PC-3 (cell line): ENCODE measurements at regions of chr11 and their contacts with region 1.

Region 1: DNA sequence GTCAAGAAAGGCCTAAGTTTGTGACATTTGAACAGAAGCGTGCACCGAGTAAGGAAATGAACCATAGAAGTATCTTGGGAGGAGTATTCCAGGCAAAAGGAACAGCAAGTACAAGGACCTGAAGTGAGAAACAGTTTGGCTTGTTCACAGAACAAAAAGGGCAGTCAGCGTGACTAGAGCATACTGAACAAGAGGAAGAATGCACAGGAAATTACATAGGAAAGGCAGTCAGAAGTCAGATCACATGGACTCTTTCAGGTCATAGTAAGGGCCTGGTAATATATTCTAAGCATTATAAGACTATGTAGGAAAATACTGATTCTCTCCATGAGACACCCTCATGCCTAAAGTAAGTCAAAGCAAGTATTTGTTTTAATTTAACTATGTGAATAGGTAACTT is 52.3 kb upstream of the GAB2 start:
- DNase-seq: no peak
- ATAC-seq: no peak
- H3K4me3 ChIP-seq: no peak overlapping the region
- H3K27ac ChIP-seq: no peak overlapping the region
- H3K4me1 ChIP-seq: peaks cover 12% of the 10 kb centered on the region
- H3K27me3 ChIP-seq: no peaks in the 10 kb centered on the region
- CTCF ChIP-seq: no peak

Region 2: DNA sequence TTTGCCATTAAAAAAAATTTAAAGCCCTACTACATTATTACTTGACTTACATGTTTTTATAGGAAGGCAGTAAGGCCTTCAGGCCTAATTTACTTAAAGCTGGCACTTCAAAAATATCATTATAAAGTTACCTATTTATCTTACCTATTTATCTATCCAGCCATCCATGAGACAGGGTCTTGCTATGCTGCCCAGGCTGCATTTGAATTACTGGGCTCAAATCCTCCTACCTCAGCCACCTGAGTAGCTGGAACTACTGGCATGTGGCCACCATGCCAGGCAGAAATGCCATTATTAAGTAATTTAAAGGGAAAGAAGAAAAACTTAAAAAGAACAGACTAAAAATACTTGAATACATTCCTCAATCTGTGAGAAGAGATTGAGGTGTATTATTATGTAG is 772.0 kb before region 1 on chr11:
- CTCF ChIA-PET with region 1: no interaction called
- POLR2A ChIA-PET with region 1: interaction called, 16 read pairs
- intact Hi-C with region 1: no loop called
- DNase-seq: no peak
- ATAC-seq: no peak
- H3K4me3 ChIP-seq: no peak overlapping the region
- H3K27ac ChIP-seq: no peak overlapping the region
- H3K4me1 ChIP-seq: no peaks in the 10 kb centered on the region; the same call in 1 of the 2 replicates
- H3K27me3 ChIP-seq: no peaks in the 10 kb centered on the region
- CTCF ChIP-seq: no peak

Region 3: DNA sequence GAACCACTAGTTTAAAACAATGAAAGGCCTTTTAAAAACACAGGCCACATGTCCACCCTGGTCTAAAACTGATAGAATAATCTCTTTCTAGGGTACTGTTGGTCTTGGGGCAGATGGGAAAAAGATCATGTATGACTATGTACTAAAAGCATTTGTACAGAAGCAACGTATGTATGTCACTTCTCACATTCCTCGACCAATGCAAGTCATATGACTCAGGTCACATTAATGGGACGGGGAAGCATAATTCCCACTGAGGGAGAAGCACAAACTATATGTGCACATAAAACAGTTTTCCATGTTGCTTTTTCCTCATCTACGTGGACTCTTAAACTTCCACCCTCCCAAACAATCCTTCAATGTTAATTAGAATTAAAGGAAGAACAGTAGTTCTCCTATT is 20.0 kb before region 1 on chr11:
- CTCF ChIA-PET with region 1: no interaction called
- POLR2A ChIA-PET with region 1: interaction called, 29 read pairs
- intact Hi-C with region 1: no loop called
- DNase-seq: no peak
- ATAC-seq: no peak
- H3K4me3 ChIP-seq: no peak overlapping the region
- H3K27ac ChIP-seq: no peak overlapping the region
- H3K4me1 ChIP-seq: no peaks in the 10 kb centered on the region
- H3K27me3 ChIP-seq: no peaks in the 10 kb centered on the region
- CTCF ChIP-seq: no peak

Region 4: GRCh38 chr11:78564490-78565467 is 94.9 kb after region 1 on chr11:
- CTCF ChIA-PET with region 1: interaction called, 3 read pairs
- POLR2A ChIA-PET with region 1: no interaction called
- intact Hi-C with region 1: loop called (anchors 5 kb)
- DNase-seq: peak; percentile 91
- ATAC-seq: peak; percentile 15; the same call in 1 of the 2 replicates
- H3K4me3 ChIP-seq: no peak overlapping the region
- H3K27ac ChIP-seq: no peak overlapping the region
- H3K4me1 ChIP-seq: peaks cover 62% of the 10 kb centered on the region
- H3K27me3 ChIP-seq: no peaks in the 10 kb centered on the region
- CTCF ChIP-seq: peak; percentile 89